ENCODE measurements at regions of chr10 and their contacts with region 1.

Region 1: DNA sequence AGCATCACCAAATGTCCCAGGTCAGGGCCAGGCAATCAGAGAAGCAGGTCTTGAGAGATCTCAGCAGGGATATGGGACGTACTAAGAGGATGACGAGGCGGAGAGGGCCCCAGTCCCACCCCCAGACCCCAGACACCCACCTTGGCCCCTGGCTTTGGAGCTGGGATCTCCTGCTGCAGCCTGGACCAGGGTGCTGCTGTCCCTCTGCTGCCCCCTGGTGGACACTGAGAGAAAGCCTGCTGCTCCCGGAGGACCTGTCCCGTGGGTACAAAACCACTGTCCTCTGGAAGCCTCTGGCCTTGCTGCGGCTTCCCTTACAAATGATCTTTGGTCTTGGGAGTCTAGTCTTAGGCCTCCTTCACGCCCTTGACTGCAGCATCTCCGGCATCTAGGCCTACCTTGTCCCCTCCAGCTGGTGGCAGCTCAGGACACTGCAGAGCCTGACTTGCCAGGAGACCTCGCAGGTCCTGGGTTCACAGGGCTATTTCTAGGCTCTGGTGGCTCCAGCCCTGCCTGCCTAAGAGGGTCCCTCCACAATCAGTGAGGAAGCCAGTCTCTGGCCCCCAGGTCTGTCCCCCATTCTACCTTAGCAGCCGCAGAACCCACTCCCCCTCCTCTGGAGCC is 97.1 kb downstream of the RGS10 start:
- DNase-seq: peak; percentile 80
- H3K4me3 Mint-ChIP-seq: no peak overlapping the region
- H3K27ac Mint-ChIP-seq: no peak overlapping the region
- H3K4me1 Mint-ChIP-seq: peaks cover 10% of the 10 kb centered on the region
- H3K27me3 Mint-ChIP-seq: no peaks in the 10 kb centered on the region
- CTCF ChIP-seq: peak; percentile 93

Region 2: DNA sequence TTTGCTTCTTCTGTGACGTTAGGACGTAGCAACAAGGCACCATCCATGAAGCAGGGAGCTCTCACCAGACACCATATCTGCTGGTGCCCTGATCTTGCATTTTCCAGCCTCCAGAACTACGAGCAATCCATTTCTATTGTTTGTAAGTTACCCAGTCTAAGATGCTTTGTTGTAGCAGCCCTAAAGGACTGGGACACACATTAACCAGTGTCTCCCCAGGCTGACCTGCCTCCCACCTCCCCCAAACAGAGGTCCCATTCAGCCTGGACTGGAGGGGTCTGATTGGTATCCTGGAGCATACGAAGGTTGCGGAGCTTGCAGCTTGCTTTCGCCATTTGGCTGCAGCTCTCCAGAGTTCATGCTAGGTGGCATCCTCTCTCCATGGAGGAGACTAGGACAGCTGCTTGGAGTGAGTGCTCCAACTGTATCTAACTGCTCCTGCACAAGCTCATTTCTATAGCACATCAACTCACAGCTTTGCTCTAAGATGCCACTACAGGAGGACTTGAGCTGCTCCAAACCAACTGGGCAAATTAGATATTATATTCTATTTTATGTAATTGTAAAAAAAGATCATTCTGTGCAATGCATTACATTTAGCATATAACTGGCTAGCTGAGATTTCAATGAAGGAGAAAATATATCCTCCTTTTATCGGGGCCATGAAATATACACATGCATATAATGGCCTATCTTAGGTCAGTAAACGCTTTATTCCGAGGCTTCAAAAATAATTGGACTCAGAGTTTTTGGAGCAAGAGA is 246.0 kb before region 1 on chr10:
- CTCF ChIA-PET with region 1: interaction called, 53 read pairs
- POLR2A ChIA-PET with region 1: interaction called, 5 read pairs
- intact Hi-C with region 1: loop called (anchors 1 kb)
- DNase-seq: peak; percentile 73
- H3K4me3 Mint-ChIP-seq: no peak overlapping the region
- H3K27ac Mint-ChIP-seq: no peak overlapping the region
- H3K4me1 Mint-ChIP-seq: peaks cover 16% of the 10 kb centered on the region
- H3K27me3 Mint-ChIP-seq: no peaks in the 10 kb centered on the region
- CTCF ChIP-seq: peak; percentile 59

Region 3: DNA sequence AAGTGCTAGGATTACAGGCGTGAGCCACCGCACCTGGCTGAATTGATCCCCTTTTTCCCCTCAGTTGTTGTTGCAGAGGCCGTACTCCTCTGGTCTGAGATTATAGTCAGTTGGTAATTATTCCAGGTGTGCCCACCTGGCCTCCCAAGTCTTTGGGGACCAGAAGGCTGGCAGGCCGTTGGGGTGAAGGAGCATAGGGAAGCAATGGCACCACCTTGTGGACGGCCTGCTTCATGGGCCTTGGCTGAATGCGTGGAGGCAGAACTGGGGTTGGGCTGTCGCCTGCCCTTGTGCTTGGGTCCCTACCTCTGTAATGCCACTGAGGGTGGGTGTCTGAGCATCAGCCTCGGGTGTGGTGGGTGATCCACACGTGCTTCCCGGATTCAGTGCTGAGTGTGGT is 28.6 kb before region 1 on chr10:
- CTCF ChIA-PET with region 1: interaction called, 12 read pairs
- POLR2A ChIA-PET with region 1: no interaction called
- intact Hi-C with region 1: no loop called
- DNase-seq: peak; percentile 75
- H3K4me3 Mint-ChIP-seq: no peak overlapping the region
- H3K27ac Mint-ChIP-seq: no peak overlapping the region
- H3K4me1 Mint-ChIP-seq: no peaks in the 10 kb centered on the region
- H3K27me3 Mint-ChIP-seq: no peaks in the 10 kb centered on the region
- CTCF ChIP-seq: peak; percentile 76

Region 4: DNA sequence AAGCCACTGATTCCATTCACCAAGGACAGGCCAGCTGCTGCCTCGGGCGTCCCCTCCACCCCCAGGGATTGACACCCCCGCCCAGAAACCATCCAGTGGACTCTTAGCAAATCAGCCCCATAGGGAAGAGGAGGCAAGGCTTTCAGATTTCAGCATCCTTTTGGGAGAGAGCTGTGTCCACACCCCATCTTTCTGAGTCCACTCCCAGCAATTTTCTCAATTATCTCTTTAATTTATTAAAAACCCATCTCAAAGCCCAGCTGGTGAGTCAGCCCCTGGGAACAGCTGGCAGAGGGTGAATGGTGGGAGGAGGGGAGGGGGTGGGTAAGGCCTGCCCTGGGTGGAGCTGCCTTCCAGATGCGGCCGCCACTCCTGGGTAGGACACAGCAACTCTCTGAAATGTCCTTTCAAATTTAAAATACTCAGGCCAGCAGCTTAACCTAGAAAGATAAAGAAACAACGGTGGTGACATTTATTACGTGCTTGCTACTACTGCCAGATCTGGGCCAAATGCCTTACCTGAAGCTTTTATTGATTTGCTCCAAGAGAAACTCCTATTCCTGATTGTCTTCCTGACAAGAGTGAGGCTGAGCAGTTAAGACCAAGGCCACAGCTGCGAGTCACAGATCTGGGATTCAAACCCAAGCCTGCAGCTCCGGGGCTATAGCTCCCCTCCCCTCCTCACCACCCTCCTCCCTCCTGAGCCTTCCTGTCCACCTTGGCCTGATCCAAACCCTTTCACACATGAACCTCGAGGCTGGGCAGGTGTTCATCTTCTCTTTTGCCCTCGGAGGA is 23.3 kb before region 1 on chr10:
- CTCF ChIA-PET with region 1: interaction called, 12 read pairs
- POLR2A ChIA-PET with region 1: no interaction called
- intact Hi-C with region 1: no loop called
- DNase-seq: no peak
- H3K4me3 Mint-ChIP-seq: no peak overlapping the region
- H3K27ac Mint-ChIP-seq: no peak overlapping the region
- H3K4me1 Mint-ChIP-seq: no peaks in the 10 kb centered on the region
- H3K27me3 Mint-ChIP-seq: no peaks in the 10 kb centered on the region
- CTCF ChIP-seq: no peak

Region 5: DNA sequence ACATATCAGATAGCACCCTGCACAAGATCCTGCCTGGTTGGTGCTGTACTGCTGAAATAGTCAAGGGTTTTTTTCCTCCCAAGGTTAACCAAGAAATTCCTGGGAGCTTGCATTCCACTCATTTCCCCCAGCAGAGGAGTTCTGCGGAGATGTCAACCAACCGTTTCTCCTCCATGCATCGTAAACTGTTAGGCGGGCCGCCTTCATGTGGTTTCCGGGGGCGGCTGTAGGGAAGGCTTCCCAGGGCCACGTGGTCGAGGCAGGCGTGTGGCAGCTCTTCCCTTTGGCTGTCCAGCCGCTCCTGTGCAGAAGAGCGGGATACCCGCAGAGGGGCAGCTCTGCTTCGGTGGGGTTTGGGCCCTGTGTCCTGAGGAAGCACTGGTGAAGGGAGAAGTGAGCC is 16.6 kb before region 1 on chr10:
- CTCF ChIA-PET with region 1: interaction called, 31 read pairs
- POLR2A ChIA-PET with region 1: no interaction called
- intact Hi-C with region 1: no loop called
- DNase-seq: no peak
- H3K4me3 Mint-ChIP-seq: no peak overlapping the region
- H3K27ac Mint-ChIP-seq: no peak overlapping the region
- H3K4me1 Mint-ChIP-seq: no peaks in the 10 kb centered on the region
- H3K27me3 Mint-ChIP-seq: no peaks in the 10 kb centered on the region
- CTCF ChIP-seq: no peak

Measured in MCF 10A (cell line).